ENCODE measurements at regions of chr10 and their contacts with region 1.

Region 1: DNA sequence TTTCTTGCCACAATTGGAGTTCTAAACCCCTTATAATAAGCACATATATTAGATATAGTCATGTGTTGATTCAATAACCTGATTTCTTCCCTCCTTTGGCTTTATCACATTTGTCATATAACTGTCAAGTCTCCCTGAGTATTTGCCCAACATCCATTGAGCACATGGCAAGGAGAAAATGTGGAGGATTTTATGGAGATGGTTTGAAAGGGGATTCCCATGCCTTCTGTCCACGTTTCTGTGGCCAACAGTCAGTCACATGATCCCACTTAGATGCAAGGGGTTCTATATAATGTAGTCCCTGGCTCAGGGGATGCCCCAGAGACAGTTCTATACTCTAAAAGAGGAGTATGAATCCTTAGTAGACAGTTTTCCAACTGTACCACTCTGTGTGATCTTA is 577.7 kb downstream of the NRG3 start:
- DNase-seq: no peak
- ATAC-seq: no peak
- H3K4me3 ChIP-seq: no peak overlapping the region
- H3K4me3 Mint-ChIP-seq: no peak overlapping the region
- H3K27ac ChIP-seq: no peak overlapping the region
- H3K27ac Mint-ChIP-seq: no peak overlapping the region
- H3K4me1 ChIP-seq: no peaks in the 10 kb centered on the region
- H3K4me1 Mint-ChIP-seq: no peaks in the 10 kb centered on the region
- H3K27me3 ChIP-seq: no peaks in the 10 kb centered on the region
- H3K27me3 Mint-ChIP-seq: no peaks in the 10 kb centered on the region

Region 2: DNA sequence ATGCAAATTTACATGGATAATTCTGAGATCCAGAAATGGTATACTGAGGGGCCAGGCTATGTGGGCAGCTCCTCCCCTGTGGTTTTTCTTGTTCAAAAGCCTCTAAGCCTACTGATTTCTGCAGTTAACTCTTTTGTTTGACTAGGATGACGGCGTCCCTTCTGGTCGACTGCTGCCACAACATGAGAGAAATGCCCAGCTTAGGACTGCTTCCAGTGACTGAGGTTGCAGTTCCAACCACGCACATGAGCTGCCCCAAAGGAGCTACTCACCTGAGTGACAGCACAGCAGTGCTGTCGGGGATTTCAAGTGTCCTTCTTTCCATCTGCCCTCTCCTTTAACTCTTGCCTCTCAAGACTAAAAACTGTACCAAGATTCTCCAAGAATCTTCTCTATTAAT is 713.7 kb after region 1 on chr10:
- CTCF ChIA-PET with region 1: no interaction called
- POLR2A ChIA-PET with region 1: interaction called in 1 of 2 experiments, 10 read pairs
- DNase-seq: no peak
- ATAC-seq: no peak
- H3K4me3 ChIP-seq: no peak overlapping the region
- H3K4me3 Mint-ChIP-seq: no peak overlapping the region
- H3K27ac ChIP-seq: no peak overlapping the region
- H3K27ac Mint-ChIP-seq: no peak overlapping the region
- H3K4me1 ChIP-seq: no peaks in the 10 kb centered on the region
- H3K4me1 Mint-ChIP-seq: no peaks in the 10 kb centered on the region
- H3K27me3 ChIP-seq: no peaks in the 10 kb centered on the region
- H3K27me3 Mint-ChIP-seq: no peaks in the 10 kb centered on the region

Measured in T-cell (primary cell).